ENCODE measurements at regions of chr11 and their contacts with region 1.

Region 1: DNA sequence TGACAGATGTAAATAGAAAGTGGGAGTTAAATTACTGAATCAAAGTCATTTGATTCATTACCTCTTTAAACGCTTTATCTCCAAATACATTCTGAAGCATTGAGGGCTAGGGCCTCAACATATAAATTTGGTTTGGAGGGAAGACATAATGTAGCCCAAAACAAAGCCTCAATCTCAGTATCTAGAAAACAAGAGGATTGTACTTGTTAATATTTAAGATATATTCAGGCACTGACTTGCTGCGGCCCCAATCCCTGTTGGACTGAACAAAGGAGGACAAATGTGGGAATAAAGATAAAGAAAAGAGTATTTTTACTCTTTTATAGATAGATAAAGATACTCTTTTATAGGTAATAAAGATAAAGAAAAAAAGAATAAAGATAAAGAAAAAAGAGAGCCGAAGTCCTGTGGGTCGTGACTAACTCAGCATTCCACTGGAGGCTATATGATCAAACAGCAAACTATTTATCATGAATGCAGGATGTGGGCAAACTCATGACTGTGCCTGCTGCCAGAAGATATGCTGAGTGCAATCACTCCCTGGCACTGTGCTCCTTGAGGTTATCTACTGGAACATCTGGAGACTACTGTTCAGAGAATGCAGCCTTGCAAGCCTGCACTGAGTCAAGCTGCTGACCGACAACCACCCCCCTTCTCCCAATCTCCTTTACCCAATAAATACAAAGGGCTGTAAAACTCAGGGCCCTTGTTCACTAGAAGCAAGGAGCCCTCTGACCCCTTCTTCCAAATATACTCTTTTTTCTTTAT is 6.9 kb downstream of the OR10V1 start:
- DNase-seq: peak; percentile 88 to 95
- H3K4me3 ChIP-seq: no peak overlapping the region
- H3K4me3 Mint-ChIP-seq: peak overlapping the region; percentile 34
- H3K27ac Mint-ChIP-seq: peak overlapping the region; percentile 84
- H3K4me1 ChIP-seq: peaks cover 53% of the 10 kb centered on the region
- H3K4me1 Mint-ChIP-seq: peaks cover 30% of the 10 kb centered on the region
- H3K27me3 ChIP-seq: no peaks in the 10 kb centered on the region
- H3K27me3 Mint-ChIP-seq: no peaks in the 10 kb centered on the region
- CTCF ChIP-seq: no peak

Region 2: DNA sequence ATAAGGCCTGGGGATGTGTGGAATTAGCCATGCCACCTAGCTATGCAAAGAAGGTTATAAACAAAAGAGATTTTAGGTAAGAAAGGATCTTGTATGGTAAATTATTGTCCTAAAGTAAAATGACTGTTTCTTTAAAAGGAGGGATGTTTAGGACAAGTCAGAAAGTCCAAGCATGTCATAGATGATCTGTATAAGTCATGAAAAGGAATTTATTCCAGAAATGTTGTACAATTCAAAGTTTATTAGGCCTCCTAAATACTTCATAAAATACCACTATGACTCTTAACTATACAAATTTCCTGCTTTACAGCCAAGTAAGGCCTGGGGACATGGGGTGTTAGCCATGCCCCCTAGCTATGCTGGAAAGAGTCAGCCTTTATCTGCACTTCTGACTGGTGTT is 303.2 kb before region 1 on chr11:
- CTCF ChIA-PET with region 1: no interaction called
- POLR2A ChIA-PET with region 1: no interaction called
- intact Hi-C with region 1: no loop called
- DNase-seq: no peak
- H3K4me3 ChIP-seq: no peak overlapping the region
- H3K4me3 Mint-ChIP-seq: no peak overlapping the region
- H3K27ac Mint-ChIP-seq: no peak overlapping the region
- H3K4me1 ChIP-seq: no peaks in the 10 kb centered on the region
- H3K4me1 Mint-ChIP-seq: no peaks in the 10 kb centered on the region
- H3K27me3 ChIP-seq: no peaks in the 10 kb centered on the region
- H3K27me3 Mint-ChIP-seq: no peaks in the 10 kb centered on the region
- CTCF ChIP-seq: no peak

Region 3: GRCh38 chr11:59728913-59729312 is 22.2 kb after region 1 on chr11:
- CTCF ChIA-PET with region 1: no interaction called
- POLR2A ChIA-PET with region 1: no interaction called
- intact Hi-C with region 1: loop called (anchors 1 kb)
- DNase-seq: no peak
- H3K4me3 ChIP-seq: no peak overlapping the region
- H3K4me3 Mint-ChIP-seq: no peak overlapping the region
- H3K27ac Mint-ChIP-seq: no peak overlapping the region
- H3K4me1 ChIP-seq: peaks cover 41% of the 10 kb centered on the region
- H3K4me1 Mint-ChIP-seq: peaks cover 16% of the 10 kb centered on the region
- H3K27me3 ChIP-seq: no peaks in the 10 kb centered on the region
- H3K27me3 Mint-ChIP-seq: no peaks in the 10 kb centered on the region
- CTCF ChIP-seq: no peak

Measured in Caco-2 (cell line).